ENCODE measurements at regions of chr15 and their contacts with region 1.

Region 1: DNA sequence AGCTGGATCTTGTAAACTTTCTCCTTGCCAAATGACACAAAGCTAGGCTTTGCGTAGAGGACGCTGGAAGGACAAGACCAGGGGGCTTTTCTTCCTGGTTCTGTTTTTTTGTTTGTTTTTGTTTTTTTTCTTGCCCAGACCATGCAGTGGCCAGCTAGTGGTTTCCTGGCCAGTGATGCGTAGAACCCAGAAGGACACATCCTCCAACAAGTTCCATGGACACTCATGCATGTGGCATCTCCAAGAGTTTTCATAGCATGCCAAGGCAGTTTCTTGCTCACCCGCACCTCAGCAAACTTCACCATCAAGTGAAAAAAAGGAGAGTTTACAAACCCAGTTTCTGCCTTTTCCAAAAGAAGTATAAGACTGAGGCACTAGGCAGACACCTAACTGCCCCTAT is 46.1 kb upstream of the TMCO5A start:
- DNase-seq: no peak
- ATAC-seq: no peak
- H3K4me3 ChIP-seq: no peak overlapping the region
- H3K27ac ChIP-seq: no peak overlapping the region
- H3K4me1 ChIP-seq: peaks cover 0 to 8% (median 0%) of the 10 kb centered on the region in 12 donors
- H3K27me3 ChIP-seq: peaks cover 0 to 1% (median 0%) of the 10 kb centered on the region in 9 donors
- CTCF ChIP-seq: no peak
- POLR2A ChIP-seq: no peak

Region 2: DNA sequence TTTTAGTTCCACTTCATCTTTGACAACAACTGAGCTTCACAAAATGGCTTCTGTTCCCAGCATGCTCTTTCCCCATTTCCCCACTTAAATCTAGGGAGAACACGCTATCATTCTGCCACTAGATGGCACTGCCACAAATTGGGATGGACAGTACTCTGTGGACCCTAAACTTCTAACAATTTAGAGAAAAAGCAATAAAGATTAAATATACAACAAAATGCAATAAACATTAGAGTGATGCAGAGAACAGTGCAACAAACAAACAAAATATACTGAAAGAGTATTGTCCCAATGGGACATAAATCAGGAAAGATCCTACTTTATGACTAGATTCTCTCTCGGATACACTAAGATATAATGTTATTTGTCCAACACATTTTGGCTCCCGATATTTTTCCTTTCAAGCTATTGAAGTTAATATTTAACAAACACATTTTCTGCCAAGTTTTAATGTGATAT is 123.6 kb before region 1 on chr15:
- intact Hi-C with region 1: loop called in 1 of 10 experiments (anchors 5 kb)
- DNase-seq: no peak
- ATAC-seq: no peak
- H3K4me3 ChIP-seq: no peak overlapping the region
- H3K27ac ChIP-seq: no peak overlapping the region
- H3K4me1 ChIP-seq: no peaks in the 10 kb centered on the region
- H3K27me3 ChIP-seq: no peaks in the 10 kb centered on the region
- CTCF ChIP-seq: peak; percentile 20 to 59 (median 42)
- POLR2A ChIP-seq: no peak

Measured in heart left ventricle (tissue), 16 donors.